ENCODE measurements at regions of chr12 and their contacts with region 1.

Region 1: GRCh38 chr12:3299929-3300832 is 190.8 kb upstream of the PRMT8 start:
- DNase-seq: peak; percentile 87
- H3K4me3 ChIP-seq: no peak overlapping the region
- H3K27ac ChIP-seq: no peak overlapping the region
- H3K4me1 ChIP-seq: peaks cover 5% of the 10 kb centered on the region
- H3K27me3 ChIP-seq: peaks cover 10% of the 10 kb centered on the region
- CTCF ChIP-seq: peak; percentile 93

Region 2: DNA sequence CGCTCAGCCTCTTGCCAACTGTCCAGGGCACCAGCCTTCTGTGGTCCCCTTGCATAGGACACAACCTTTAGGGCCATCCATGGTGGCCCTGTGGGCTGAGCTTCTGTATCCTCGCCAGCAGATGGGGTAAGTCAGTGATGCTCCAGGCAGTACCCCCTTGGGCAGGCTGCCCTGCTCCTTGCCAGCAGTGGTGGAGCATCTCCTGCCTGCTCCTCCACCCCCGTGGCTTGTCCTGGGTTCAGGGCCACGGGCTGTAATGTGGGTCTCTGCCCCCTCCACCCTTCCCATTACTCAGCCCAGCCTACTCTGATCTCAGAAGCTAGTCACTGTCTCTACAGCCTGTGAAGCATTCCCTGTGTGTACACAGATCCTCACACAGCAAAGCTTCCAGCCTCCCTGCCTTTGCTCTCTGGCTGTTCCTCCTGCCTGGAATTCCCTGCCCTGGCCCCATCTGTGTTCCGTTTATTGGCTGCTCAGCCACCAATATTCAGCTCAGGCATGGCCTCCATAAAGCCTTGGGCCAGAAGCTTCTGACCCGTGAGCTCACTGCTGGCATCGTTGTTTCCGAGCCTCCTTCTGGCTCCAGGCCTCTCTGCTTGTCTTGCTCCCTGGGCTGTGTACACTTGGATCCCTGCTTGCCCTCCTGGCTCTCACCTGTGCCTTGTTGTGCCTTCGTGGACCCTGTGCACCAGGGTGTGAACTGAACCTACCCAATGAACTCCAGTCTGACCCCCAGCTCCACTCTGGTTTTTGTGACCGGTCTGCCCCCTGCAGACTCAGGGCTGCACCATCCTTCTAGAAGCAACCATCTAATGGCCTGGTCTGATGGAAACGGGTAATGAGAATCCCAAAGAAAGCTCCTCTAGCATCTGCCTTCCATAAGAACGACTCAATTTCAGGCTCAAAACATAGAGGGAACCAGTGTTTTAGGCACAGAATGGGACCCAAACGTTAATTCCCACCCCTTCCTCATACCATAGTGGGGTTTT is 13.8 kb after region 1 on chr12:
- CTCF ChIA-PET with region 1: interaction called, 10 read pairs
- POLR2A ChIA-PET with region 1: no interaction called
- intact Hi-C with region 1: no loop called
- DNase-seq: peak; percentile 44
- H3K4me3 ChIP-seq: no peak overlapping the region
- H3K27ac ChIP-seq: no peak overlapping the region
- H3K4me1 ChIP-seq: no peaks in the 10 kb centered on the region
- H3K27me3 ChIP-seq: no peaks in the 10 kb centered on the region
- CTCF ChIP-seq: peak; percentile 54

Region 3: GRCh38 chr12:3527181-3527580 is 227.0 kb after region 1 on chr12:
- CTCF ChIA-PET with region 1: interaction called, 4 read pairs
- POLR2A ChIA-PET with region 1: no interaction called
- intact Hi-C with region 1: loop called (anchors 10 kb)
- DNase-seq: peak; percentile 54
- H3K4me3 ChIP-seq: no peak overlapping the region
- H3K27ac ChIP-seq: no peak overlapping the region
- H3K4me1 ChIP-seq: no peaks in the 10 kb centered on the region
- H3K27me3 ChIP-seq: no peaks in the 10 kb centered on the region
- CTCF ChIP-seq: no peak

Region 4: GRCh38 chr12:3644104-3644503 is 343.9 kb after region 1 on chr12:
- CTCF ChIA-PET with region 1: no interaction called
- POLR2A ChIA-PET with region 1: no interaction called
- intact Hi-C with region 1: loop called (anchors 2 kb)
- DNase-seq: peak; percentile 7
- H3K4me3 ChIP-seq: no peak overlapping the region
- H3K27ac ChIP-seq: no peak overlapping the region
- H3K4me1 ChIP-seq: no peaks in the 10 kb centered on the region
- H3K27me3 ChIP-seq: peaks cover 11% of the 10 kb centered on the region
- CTCF ChIP-seq: peak; percentile 37; the same call in 1 of the 2 replicates

Region 5: DNA sequence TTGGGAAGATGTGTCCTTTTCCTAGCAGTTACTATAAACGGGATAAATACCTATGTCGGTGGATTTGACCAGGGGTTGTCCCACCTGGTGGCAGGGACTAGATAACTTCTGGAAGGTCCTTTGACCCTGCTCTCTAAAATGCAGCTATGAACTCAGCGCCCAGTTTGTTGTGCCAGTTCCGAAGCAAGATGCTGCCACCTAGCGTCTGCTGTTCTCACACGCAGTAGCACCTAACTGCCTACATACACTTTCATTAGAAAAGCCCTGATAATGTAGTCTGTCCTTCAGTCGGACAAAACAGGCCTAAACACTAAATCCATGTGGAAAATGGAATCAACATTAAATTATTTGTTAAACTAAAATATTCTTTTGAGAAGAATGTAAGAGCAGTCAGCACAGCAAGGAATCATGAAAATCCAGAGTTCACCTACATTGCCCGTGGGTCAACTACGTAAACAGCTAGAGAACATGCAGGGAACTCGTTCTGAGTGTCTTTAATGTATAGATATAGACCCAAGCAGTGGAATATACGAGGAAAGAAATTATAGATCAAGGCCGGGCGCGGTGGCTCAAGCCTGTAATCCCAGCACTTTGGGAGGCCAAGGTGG is 503.8 kb after region 1 on chr12:
- CTCF ChIA-PET with region 1: interaction called, 22 read pairs
- POLR2A ChIA-PET with region 1: no interaction called
- intact Hi-C with region 1: loop called (anchors 2 kb)
- DNase-seq: peak; percentile 62
- H3K4me3 ChIP-seq: no peak overlapping the region
- H3K27ac ChIP-seq: no peak overlapping the region
- H3K4me1 ChIP-seq: no peaks in the 10 kb centered on the region
- H3K27me3 ChIP-seq: no peaks in the 10 kb centered on the region
- CTCF ChIP-seq: peak; percentile 92

Measured in A673 (cell line).